ENCODE measurements at regions of chr1 and their contacts with region 1.

Region 1: GRCh38 chr1:151728151-151729054 is 7.1 kb downstream of the RIIAD1 start:
- DNase-seq: no peak
- ATAC-seq: no peak
- H3K4me3 ChIP-seq: no peak overlapping the region
- H3K27ac ChIP-seq: no peak overlapping the region
- H3K4me1 ChIP-seq: no peaks in the 10 kb centered on the region
- H3K27me3 ChIP-seq: no peaks in the 10 kb centered on the region; a peak in 1 of 4 replicates
- CTCF ChIP-seq: no peak
- EP300 ChIP-seq: no peak
- POLR2A ChIP-seq: no peak
- RAD21 ChIP-seq: no peak

Region 2: GRCh38 chr1:150813058-150813707 is 915.2 kb before region 1 on chr1:
- CTCF ChIA-PET with region 1: no interaction called
- POLR2A ChIA-PET with region 1: no interaction called
- RAD21 ChIA-PET with region 1: no interaction called
- SMC1A ChIA-PET with region 1: no interaction called
- in situ Hi-C with region 1: no loop called
- intact Hi-C with region 1: no loop called
- DNase-seq: no peak
- ATAC-seq: peak; percentile 85
- H3K4me3 ChIP-seq: no peak overlapping the region
- H3K27ac ChIP-seq: no peak overlapping the region
- H3K4me1 ChIP-seq: no peaks in the 10 kb centered on the region
- H3K27me3 ChIP-seq: no peaks in the 10 kb centered on the region
- CTCF ChIP-seq: peak; percentile 57 to 65 (median 59)
- EP300 ChIP-seq: no peak
- POLR2A ChIP-seq: no peak
- RAD21 ChIP-seq: peak; percentile 67

Region 3: GRCh38 chr1:151594143-151594625 is 134.2 kb before region 1 on chr1:
- CTCF ChIA-PET with region 1: interaction called, 5 read pairs
- POLR2A ChIA-PET with region 1: no interaction called
- RAD21 ChIA-PET with region 1: interaction called, 7 read pairs
- SMC1A ChIA-PET with region 1: interaction called, 7 read pairs
- in situ Hi-C with region 1: loop called (anchors 5 kb)
- intact Hi-C with region 1: no loop called
- DNase-seq: no peak
- ATAC-seq: peak; percentile 99
- H3K4me3 ChIP-seq: no peak overlapping the region
- H3K27ac ChIP-seq: no peak overlapping the region
- H3K4me1 ChIP-seq: no peaks in the 10 kb centered on the region
- H3K27me3 ChIP-seq: no peaks in the 10 kb centered on the region; a peak in 1 of 4 replicates
- CTCF ChIP-seq: peak; percentile 95 to 97 (median 95)
- EP300 ChIP-seq: no peak
- POLR2A ChIP-seq: no peak
- RAD21 ChIP-seq: peak; percentile 81

Region 4: DNA sequence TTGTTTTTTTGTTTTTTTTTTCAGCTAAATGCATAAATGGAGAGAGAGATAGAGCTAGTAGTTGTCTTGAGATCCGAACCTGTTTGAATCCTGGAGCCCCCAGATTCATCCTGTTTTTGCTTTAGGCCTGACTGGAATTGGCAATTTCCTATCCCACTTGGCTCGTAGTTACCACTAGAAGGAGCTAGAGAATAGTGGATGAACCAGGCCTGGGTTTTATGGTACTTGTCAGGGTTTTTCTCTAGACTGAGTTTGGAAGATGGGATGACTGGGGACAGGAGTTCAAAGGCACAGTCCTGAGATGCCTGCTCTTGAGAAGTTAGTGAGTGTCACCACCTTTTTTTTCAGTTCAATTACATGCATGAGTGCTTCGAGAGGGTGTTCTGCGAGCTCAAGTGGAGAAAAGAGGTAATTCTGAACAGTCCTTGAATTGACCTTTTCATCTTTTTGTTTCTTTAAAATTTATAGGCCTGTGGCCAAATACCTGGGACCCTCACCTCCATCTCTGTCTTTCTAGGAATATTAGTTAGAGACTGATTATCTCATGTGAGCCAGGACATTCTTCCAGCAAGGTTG is 35.2 kb before region 1 on chr1:
- CTCF ChIA-PET with region 1: interaction called, 16 read pairs
- POLR2A ChIA-PET with region 1: no interaction called
- RAD21 ChIA-PET with region 1: no interaction called
- SMC1A ChIA-PET with region 1: interaction called, 3 read pairs
- in situ Hi-C with region 1: no loop called
- intact Hi-C with region 1: no loop called
- DNase-seq: no peak
- ATAC-seq: no peak
- H3K4me3 ChIP-seq: no peak overlapping the region
- H3K27ac ChIP-seq: no peak overlapping the region
- H3K4me1 ChIP-seq: no peaks in the 10 kb centered on the region
- H3K27me3 ChIP-seq: no peaks in the 10 kb centered on the region
- CTCF ChIP-seq: peak; percentile 54 to 66 (median 61); a peak in 5 of 6 replicates
- EP300 ChIP-seq: no peak
- POLR2A ChIP-seq: no peak
- RAD21 ChIP-seq: peak; percentile 79

Region 5: GRCh38 chr1:151762941-151763921 is 34.8 kb after region 1 on chr1 and contains the start of gene MRPL9:
- CTCF ChIA-PET with region 1: interaction called, 10 read pairs
- POLR2A ChIA-PET with region 1: no interaction called
- RAD21 ChIA-PET with region 1: interaction called, 3 read pairs
- SMC1A ChIA-PET with region 1: no interaction called
- in situ Hi-C with region 1: no loop called
- intact Hi-C with region 1: no loop called
- DNase-seq: peak; percentile 45
- ATAC-seq: peak; percentile 100
- H3K4me3 ChIP-seq: peak within 1 kb of the TSS; percentile 82
- H3K27ac ChIP-seq: peak within 1 kb of the TSS; percentile 84
- H3K4me1 ChIP-seq: no peaks in the 10 kb centered on the region
- H3K27me3 ChIP-seq: no peaks in the 10 kb centered on the region
- CTCF ChIP-seq: no peak
- EP300 ChIP-seq: no peak
- POLR2A ChIP-seq: peak; percentile 90
- RAD21 ChIP-seq: no peak
- polyA plus RNA-seq, gene MRPL9: 35.7 to 66.7 TPM